ENCODE measurements at regions of chr5 and their contacts with region 1.

Region 1: GRCh38 chr5:45038366-45038987 is 229.7 kb downstream of the MRPS30 start:
- DNase-seq: peak; percentile 34
- H3K27ac ChIP-seq: no peak overlapping the region
- CTCF ChIP-seq: peak; percentile 86

Region 2: GRCh38 chr5:45696206-45696836 is 657.8 kb after region 1 on chr5 and contains the start of gene HCN1:
- CTCF ChIA-PET with region 1: interaction called, 11 read pairs
- POLR2A ChIA-PET with region 1: no interaction called
- DNase-seq: peak; percentile 69
- H3K27ac ChIP-seq: no peak within 1 kb of the TSS
- CTCF ChIP-seq: peak; percentile 98